ENCODE measurements at regions of chr7 and their contacts with region 1.

Region 1: DNA sequence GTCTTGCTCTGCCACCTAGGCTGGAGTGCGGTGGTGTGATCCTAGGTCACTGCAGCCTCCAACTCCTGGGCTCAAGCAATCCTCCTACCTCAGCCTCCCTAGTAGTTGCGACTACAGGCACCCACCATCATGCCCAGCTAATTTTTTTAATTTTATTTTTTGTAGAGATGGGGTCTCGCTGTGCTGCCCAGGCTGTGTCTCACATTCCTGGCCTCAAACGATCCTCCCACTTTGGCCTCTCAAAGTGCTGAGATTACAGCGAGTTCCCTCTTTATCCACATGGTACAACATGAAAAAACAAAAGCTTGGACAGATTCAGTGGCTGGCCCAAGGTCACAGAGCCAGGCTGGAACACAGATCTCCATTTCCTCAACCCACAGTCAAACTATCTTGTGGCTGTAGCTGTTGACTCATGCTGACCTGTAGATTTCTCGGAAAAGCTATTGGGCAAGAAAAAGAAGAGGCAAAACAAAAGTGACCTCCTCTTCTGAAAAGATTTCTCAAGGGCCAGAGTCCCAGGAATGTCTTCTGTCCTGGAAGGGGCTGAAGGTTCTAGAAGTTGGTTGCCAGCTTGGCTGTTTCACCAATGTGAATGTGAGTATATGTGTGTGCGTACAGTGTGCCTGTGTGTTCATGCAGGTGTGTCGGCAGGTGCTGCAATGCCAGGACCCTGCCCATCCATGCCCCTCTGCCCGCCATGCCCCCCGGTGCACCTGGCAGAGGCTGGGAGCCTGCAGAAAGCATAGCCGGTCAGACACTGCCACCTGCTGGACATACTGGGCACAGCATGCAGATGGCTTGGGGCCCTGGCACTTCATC is 28.4 kb downstream of the TMEM130 start:
- DNase-seq: peak; percentile 59 to 76
- ATAC-seq: peak; percentile 68 to 82
- H3K4me3 ChIP-seq: no peak overlapping the region
- H3K27ac ChIP-seq: peak overlapping the region in 1 of 2 experiments; percentile 54; a peak in 3 of 6 replicates
- H3K4me1 ChIP-seq: peaks cover 13% of the 10 kb centered on the region; the same call in 2 of the 3 replicates
- CTCF ChIP-seq: peak; percentile 96
- EP300 ChIP-seq: no peak
- POLR2A ChIP-seq: no peak
- RAD21 ChIP-seq: peak; percentile 99

Region 2: GRCh38 chr7:98420966-98421612 is 420.3 kb before region 1 on chr7:
- CTCF ChIA-PET with region 1: interaction called, 288 read pairs
- POLR2A ChIA-PET with region 1: no interaction called
- DNase-seq: peak; percentile 89 to 92
- ATAC-seq: peak; percentile 53 to 64; a peak in 5 of 6 replicates
- H3K4me3 ChIP-seq: no peak overlapping the region
- H3K27ac ChIP-seq: peak overlapping the region; percentile 55 to 72
- H3K4me1 ChIP-seq: peaks cover 43% of the 10 kb centered on the region
- CTCF ChIP-seq: peak; percentile 94
- EP300 ChIP-seq: no peak
- POLR2A ChIP-seq: no peak
- RAD21 ChIP-seq: peak; percentile 83 to 84

Region 3: GRCh38 chr7:98448766-98449165 is 392.6 kb before region 1 on chr7:
- CTCF ChIA-PET with region 1: interaction called, 28 read pairs
- POLR2A ChIA-PET with region 1: no interaction called
- DNase-seq: no peak
- ATAC-seq: no peak
- H3K4me3 ChIP-seq: no peak overlapping the region
- H3K27ac ChIP-seq: no peak overlapping the region
- H3K4me1 ChIP-seq: no peaks in the 10 kb centered on the region
- CTCF ChIP-seq: no peak
- EP300 ChIP-seq: no peak
- POLR2A ChIP-seq: no peak
- RAD21 ChIP-seq: no peak

Region 4: DNA sequence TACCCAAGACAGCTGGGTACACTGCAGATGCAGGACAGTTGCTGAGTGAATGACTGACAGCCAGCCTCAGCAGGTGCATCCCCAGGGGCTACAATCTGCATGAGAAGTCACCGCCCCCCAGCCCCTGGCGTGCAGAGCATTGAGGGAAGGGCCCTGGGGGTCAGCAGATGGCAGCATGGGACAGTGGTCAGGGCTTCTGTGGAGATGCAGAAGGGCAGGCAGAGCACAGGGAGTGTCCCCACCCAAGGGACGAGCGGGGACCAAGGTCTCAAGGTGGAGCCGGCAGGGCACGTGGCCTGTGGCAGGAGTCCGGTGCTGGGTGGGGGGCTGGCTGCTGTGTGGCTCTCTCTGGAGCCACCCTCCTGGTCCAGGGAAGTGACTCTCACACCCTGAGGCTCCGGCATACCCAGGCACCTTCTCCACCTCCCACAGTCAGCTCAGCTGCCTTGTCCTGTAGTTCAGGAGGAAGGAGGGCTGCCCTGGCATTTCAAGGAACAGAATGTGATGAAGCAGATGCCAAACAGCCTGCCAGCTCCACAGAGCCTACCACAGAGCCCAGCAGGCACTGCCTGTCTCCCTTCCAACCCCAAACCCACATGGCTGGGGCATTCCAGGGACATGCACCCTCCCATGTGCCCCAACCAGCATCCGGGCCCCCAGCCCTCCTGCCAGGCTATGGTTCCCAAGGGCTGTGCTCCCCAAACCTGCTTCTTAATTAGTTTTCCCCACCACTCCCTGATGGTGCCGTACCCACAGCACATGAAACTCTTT is 86.1 kb before region 1 on chr7:
- CTCF ChIA-PET with region 1: interaction called, 25 read pairs
- POLR2A ChIA-PET with region 1: no interaction called
- DNase-seq: no peak
- ATAC-seq: peak; percentile 46 to 74; a peak in 5 of 6 replicates
- H3K4me3 ChIP-seq: no peak overlapping the region
- H3K27ac ChIP-seq: peak overlapping the region in 1 of 2 experiments; percentile 44; a peak in 2 of 6 replicates
- H3K4me1 ChIP-seq: no peaks in the 10 kb centered on the region
- CTCF ChIP-seq: 0 out of 3 replicates have a peak, but pooled peaks have one; percentile 15
- EP300 ChIP-seq: no peak
- POLR2A ChIP-seq: no peak
- RAD21 ChIP-seq: peak; percentile 56 to 65

Region 5: GRCh38 chr7:98810153-98810802 is 31.1 kb before region 1 on chr7:
- CTCF ChIA-PET with region 1: interaction called, 10 read pairs
- POLR2A ChIA-PET with region 1: no interaction called
- DNase-seq: no peak
- ATAC-seq: no peak
- H3K4me3 ChIP-seq: no peak overlapping the region
- H3K27ac ChIP-seq: no peak overlapping the region
- H3K4me1 ChIP-seq: no peaks in the 10 kb centered on the region
- CTCF ChIP-seq: no peak
- EP300 ChIP-seq: no peak
- POLR2A ChIP-seq: no peak
- RAD21 ChIP-seq: no peak

Region 6: GRCh38 chr7:98862203-98862602 is 20.8 kb after region 1 on chr7:
- CTCF ChIA-PET with region 1: interaction called, 68 read pairs
- POLR2A ChIA-PET with region 1: no interaction called
- DNase-seq: no peak
- ATAC-seq: no peak
- H3K4me3 ChIP-seq: no peak overlapping the region
- H3K27ac ChIP-seq: no peak overlapping the region
- H3K4me1 ChIP-seq: 0 out of 3 replicates have a peak, but pooled peaks cover 3% of the 10 kb centered on the region
- CTCF ChIP-seq: no peak
- EP300 ChIP-seq: no peak
- POLR2A ChIP-seq: no peak
- RAD21 ChIP-seq: no peak

Measured in A549 (cell line).